ENCODE measurements at regions of chrX and their contacts with region 1.

Region 1: GRCh38 chrX:70096052-70096451 is 33.8 kb downstream of the OTUD6A start:
- DNase-seq: no peak
- ATAC-seq: no peak
- H3K4me3 ChIP-seq: no peak overlapping the region
- H3K4me3 Mint-ChIP-seq: no peak overlapping the region
- H3K27ac ChIP-seq: no peak overlapping the region
- H3K27ac Mint-ChIP-seq: no peak overlapping the region
- H3K4me1 ChIP-seq: no peaks in the 10 kb centered on the region
- H3K4me1 Mint-ChIP-seq: no peaks in the 10 kb centered on the region
- H3K27me3 ChIP-seq: no peaks in the 10 kb centered on the region
- H3K27me3 Mint-ChIP-seq: peaks cover 8% of the 10 kb centered on the region
- CTCF ChIP-seq: no peak

Region 2: DNA sequence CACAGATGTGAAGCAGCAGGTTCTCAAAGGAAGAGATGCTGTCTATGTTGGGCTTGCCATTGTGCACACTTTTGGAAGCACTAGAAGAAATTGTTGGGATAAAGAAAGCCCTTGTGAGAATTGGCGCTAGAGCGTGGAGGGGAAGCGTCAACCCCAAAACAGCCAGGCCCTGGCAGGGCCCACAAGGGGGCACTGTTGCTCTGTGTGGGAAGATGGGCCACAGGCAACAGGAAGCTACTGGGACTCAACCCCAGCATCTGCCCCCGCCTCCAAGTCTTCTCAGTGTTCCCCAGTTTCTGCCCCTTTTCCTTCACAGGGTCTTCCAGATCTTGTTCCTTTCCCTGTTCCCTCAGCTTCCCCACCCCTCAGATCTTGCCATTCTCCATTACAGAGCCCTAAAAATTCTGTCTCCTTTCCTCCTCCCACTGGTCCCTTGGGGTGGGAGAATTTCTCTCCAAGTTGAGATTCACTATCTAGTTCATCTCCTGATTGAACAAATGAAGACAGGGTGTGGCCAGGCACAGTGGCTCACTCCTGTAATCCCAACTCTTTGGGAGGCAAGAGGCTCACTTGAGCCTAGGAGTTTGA is 1363.1 kb before region 1 on chrX:
- CTCF ChIA-PET with region 1: no interaction called
- POLR2A ChIA-PET with region 1: no interaction called
- intact Hi-C with region 1: loop called in 1 of 2 experiments (anchors 5 kb)
- DNase-seq: peak; percentile 14 to 70 (median 48)
- ATAC-seq: no peak
- H3K4me3 ChIP-seq: no peak overlapping the region
- H3K4me3 Mint-ChIP-seq: no peak overlapping the region
- H3K27ac ChIP-seq: no peak overlapping the region
- H3K27ac Mint-ChIP-seq: no peak overlapping the region
- H3K4me1 ChIP-seq: no peaks in the 10 kb centered on the region
- H3K4me1 Mint-ChIP-seq: no peaks in the 10 kb centered on the region
- H3K27me3 ChIP-seq: no peaks in the 10 kb centered on the region
- H3K27me3 Mint-ChIP-seq: peaks cover 11% of the 10 kb centered on the region
- CTCF ChIP-seq: peak; percentile 27

Region 3: GRCh38 chrX:69493193-69493592 is 602.9 kb before region 1 on chrX:
- CTCF ChIA-PET with region 1: no interaction called
- POLR2A ChIA-PET with region 1: no interaction called
- intact Hi-C with region 1: loop called in 1 of 2 experiments (anchors 5 kb)
- DNase-seq: peak in 3 of 9 experiments; percentile 11 to 28 (median 15)
- ATAC-seq: no peak
- H3K4me3 ChIP-seq: no peak overlapping the region
- H3K4me3 Mint-ChIP-seq: no peak overlapping the region
- H3K27ac ChIP-seq: no peak overlapping the region
- H3K27ac Mint-ChIP-seq: no peak overlapping the region
- H3K4me1 ChIP-seq: no peaks in the 10 kb centered on the region
- H3K4me1 Mint-ChIP-seq: no peaks in the 10 kb centered on the region
- H3K27me3 ChIP-seq: no peaks in the 10 kb centered on the region
- H3K27me3 Mint-ChIP-seq: peaks cover 11% of the 10 kb centered on the region
- CTCF ChIP-seq: no peak

Region 4: DNA sequence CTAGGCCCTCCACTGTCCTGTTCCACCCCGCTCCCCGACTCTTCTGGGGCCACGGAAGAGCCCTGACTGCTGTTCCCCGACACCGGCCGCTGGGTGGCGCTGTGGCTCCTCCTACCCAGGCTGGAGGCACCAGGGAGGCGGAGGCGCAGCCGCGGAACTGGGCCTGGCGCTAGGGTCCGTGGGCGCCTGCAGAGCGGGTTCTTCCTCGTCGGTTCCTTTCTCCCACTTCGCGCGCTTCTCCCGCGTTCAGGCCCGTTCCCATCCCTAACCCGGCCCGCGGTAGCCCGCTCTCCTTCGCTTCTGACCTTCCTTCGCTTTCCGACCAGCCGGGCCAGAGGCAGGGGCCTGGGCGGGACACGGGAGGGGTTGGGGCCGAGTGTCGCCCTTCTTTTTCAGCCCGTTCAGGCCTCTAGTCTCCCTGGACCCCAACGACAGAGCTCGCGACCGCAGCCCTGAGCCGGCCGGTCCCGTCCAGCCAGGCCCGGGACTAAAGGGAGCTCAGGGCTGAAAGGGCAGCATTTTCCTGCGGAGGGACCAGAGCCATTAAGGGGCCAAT is 557.7 kb before region 1 on chrX:
- CTCF ChIA-PET with region 1: interaction called, 7 read pairs
- POLR2A ChIA-PET with region 1: no interaction called
- intact Hi-C with region 1: loop called in 1 of 2 experiments (anchors 1 kb)
- DNase-seq: peak; percentile 32 to 77 (median 66)
- ATAC-seq: peak; percentile 73
- H3K4me3 ChIP-seq: peak overlapping the region in 1 of 2 experiments; percentile 32
- H3K4me3 Mint-ChIP-seq: peak overlapping the region; percentile 45
- H3K27ac ChIP-seq: no peak overlapping the region
- H3K27ac Mint-ChIP-seq: no peak overlapping the region
- H3K4me1 ChIP-seq: no peaks in the 10 kb centered on the region
- H3K4me1 Mint-ChIP-seq: peaks cover 14% of the 10 kb centered on the region
- H3K27me3 ChIP-seq: no peaks in the 10 kb centered on the region
- H3K27me3 Mint-ChIP-seq: peaks cover 3% of the 10 kb centered on the region
- CTCF ChIP-seq: peak; percentile 40